Panc1 (cell line): ENCODE measurements at regions of chr3 and their contacts with region 1.

Region 1: GRCh38 chr3:14871481-14872200 is 52.9 kb downstream of the FGD5 start:
- DNase-seq: no peak
- ATAC-seq: no peak
- H3K4me3 ChIP-seq: no peak overlapping the region
- H3K27ac ChIP-seq: no peak overlapping the region
- H3K4me1 ChIP-seq: no peaks in the 10 kb centered on the region
- H3K27me3 ChIP-seq: no peaks in the 10 kb centered on the region
- CTCF ChIP-seq: no peak

Region 2: DNA sequence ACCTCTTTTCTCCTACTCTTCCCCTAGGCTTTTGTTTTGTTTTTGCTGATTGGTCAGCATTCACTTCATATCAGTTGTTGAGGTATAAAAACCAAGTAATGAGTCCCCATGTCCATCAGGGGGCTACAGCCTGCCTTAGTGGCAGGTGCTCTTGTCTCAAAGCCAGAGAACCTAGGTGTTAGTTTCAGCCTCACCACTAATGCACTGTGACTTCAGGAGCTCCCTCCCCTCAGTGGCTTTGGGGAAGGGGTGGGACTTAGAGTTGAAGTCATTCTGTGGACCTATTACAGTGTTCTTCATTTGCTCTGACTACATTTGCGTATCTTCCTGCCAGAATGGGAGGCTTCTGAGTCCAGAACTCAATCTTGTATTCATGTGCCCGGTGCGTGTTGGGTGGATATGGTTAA is 117.3 kb after region 1 on chr3:
- CTCF ChIA-PET with region 1: no interaction called
- POLR2A ChIA-PET with region 1: interaction called, 10 read pairs
- in situ Hi-C with region 1: no loop called
- intact Hi-C with region 1: no loop called
- DNase-seq: no peak
- ATAC-seq: no peak
- H3K4me3 ChIP-seq: no peak overlapping the region
- H3K27ac ChIP-seq: no peak overlapping the region
- H3K4me1 ChIP-seq: peaks cover 7% of the 10 kb centered on the region
- H3K27me3 ChIP-seq: no peaks in the 10 kb centered on the region
- CTCF ChIP-seq: 0 out of 2 replicates have a peak, but pooled peaks have one; percentile 6